Heart right ventricle (tissue), 16 donors: ENCODE measurements at regions of chr18 and their contacts with region 1.

Region 1: DNA sequence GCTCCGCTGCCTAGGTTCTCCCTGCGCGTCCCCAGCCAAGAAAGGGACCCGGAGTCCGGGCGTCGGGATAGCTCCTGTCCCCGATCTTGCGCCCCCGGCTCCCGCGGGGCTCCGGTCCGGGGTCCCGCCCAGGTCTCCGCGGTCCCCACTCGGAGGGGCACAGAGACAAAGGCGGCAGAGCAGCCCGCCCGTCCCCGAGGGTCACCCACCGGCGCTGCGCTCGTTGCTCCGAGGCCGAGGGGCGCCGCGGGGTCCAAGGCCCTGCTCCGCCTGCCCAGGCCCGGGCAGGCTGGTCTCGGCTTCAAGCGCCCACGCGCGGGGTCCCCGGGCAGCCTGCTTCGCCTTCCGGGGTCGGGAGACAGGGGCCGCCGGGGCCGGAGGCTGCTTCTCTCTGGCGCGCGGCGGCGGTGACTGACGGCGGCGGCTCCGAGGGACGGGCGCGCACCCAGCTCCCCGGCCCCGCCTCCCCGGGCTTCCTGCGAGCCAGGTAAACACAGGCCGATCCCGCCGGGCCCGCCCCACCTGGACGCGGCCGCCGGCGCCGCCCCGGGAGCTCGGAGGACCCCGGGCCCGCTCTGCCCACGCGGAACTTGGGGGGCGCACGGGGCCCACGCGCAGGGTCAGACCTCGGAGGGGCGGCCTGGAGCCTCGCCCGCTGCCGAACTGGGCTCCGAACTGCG is at the start of gene MBP:
- DNase-seq: peak; percentile 50 to 59
- ATAC-seq: peak; percentile 17 to 64 (median 58)
- H3K4me3 ChIP-seq: peak within 1 kb of the TSS; percentile 54 to 92 (median 84)
- H3K27ac ChIP-seq: peak within 1 kb of the TSS; percentile 62 to 99 (median 90)
- H3K4me1 ChIP-seq: peaks cover 5 to 61% (median 48%) of the 10 kb centered on the region in 9 donors
- H3K27me3 ChIP-seq: peaks cover 0 to 41% (median 12%) of the 10 kb centered on the region in 7 donors
- CTCF ChIP-seq: no peak
- total RNA-seq, gene MBP: 18.4 to 70.8 (median 52.6) TPM

Region 2: DNA sequence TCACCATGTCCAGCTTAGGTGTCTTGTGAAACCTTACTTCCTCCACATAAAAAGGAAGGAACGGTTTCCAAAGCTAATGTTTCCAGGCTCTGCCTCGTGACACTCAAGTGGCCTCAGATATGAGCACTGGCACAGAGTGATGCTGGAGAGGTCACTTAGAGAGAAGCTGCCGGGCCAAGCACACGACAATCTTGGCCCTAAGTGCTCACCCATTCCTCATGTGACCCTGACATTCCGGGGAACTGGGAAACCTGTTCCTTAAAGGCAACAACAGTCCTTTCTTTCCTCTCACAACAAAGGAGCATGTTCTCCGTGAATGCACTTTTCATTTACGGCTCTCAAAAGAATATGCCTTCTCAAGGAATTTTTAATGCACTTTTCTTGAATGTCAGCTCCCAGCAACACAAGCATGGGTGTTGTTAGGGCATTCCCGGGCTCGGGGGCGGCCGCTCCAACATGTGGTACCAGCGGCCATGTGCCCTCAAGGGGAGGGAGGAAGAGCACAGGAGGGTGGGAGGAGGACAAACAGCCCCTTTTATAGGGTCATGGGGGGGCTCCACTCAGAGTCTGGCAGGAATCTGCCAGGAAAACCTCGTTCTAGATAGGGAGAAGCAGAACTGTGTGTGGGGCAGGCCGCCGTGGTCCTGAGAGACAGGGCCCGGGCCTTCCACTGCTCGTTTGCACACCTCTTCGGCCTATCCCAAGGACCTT is 118.5 kb before region 1 on chr18:
- intact Hi-C with region 1: loop called in 6 of 10 experiments (anchors 5 to 10 kb)
- DNase-seq: peak; percentile 48 to 68
- ATAC-seq: peak; percentile 86 to 98 (median 96)
- H3K4me3 ChIP-seq: no peak overlapping the region
- H3K27ac ChIP-seq: peak overlapping the region; percentile 30 to 85 (median 77)
- H3K4me1 ChIP-seq: peaks cover 5 to 38% (median 32%) of the 10 kb centered on the region in 9 donors
- H3K27me3 ChIP-seq: no peaks in the 10 kb centered on the region
- CTCF ChIP-seq: no peak

Region 3: DNA sequence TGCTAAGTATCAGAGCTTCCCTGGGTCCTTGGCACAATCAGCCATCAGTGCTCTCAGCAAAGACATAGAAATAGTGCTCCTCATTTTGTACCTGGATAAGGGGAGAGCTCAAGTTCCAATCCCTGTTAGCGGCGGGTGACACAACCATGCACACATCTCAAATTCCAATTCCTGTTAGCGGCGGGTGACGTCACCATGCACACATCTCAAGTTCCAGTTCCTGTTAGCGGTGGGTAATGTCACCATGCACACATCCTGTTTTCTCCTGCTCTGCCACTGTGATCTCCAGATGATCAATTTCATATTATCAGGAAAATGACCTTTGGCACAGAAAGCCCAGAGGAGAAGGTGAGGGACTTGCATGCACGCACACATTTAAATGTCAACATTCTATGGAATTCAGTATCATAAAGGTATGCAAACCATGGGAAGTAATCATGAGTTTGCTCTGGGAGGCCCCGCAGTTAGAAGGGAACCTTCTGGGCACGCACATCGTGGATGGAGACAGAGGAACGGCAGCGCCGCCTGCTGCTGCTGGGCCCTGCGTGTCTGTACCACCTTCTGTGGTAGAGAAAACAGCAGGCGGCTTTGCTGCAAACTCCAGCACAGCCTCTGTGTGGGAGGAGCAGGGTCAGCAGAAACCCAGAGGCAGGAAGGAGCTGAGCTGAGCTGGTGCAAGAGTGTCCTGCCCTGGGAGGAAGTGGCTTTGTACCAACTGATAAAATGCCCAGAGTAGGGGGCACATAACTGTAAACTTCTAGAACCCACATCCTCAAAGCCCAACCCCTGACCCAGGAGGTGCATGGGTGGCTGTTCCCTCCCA is 77.7 kb before region 1 on chr18:
- intact Hi-C with region 1: loop called in 3 of 10 experiments (anchors 5 kb)
- DNase-seq: peak; percentile 80 to 81
- ATAC-seq: peak; percentile 76 to 83 (median 81)
- H3K4me3 ChIP-seq: peak overlapping the region in 1 of 10 donors; percentile 42
- H3K27ac ChIP-seq: peak overlapping the region in 9 of 10 donors; percentile 54 to 98 (median 76)
- H3K4me1 ChIP-seq: peaks cover 15 to 93% (median 52%) of the 10 kb centered on the region in 9 donors
- H3K27me3 ChIP-seq: no peaks in the 10 kb centered on the region
- CTCF ChIP-seq: peak in 8 of 9 donors; percentile 46 to 77 (median 64)

Region 4: GRCh38 chr18:77069482-77069881 is 63.0 kb before region 1 on chr18:
- intact Hi-C with region 1: no loop called
- DNase-seq: no peak
- ATAC-seq: no peak
- H3K4me3 ChIP-seq: no peak overlapping the region
- H3K27ac ChIP-seq: peak overlapping the region in 8 of 10 donors; percentile 61 to 91 (median 78)
- H3K4me1 ChIP-seq: peaks cover 10 to 96% (median 71%) of the 10 kb centered on the region in 9 donors
- H3K27me3 ChIP-seq: no peaks in the 10 kb centered on the region
- CTCF ChIP-seq: no peak

Region 5: GRCh38 chr18:77079954-77080682 is 52.4 kb before region 1 on chr18:
- intact Hi-C with region 1: loop called in 1 of 10 experiments (anchors 5 kb)
- DNase-seq: no peak
- ATAC-seq: peak in 7 of 8 donors; percentile 23 to 54 (median 36)
- H3K4me3 ChIP-seq: no peak overlapping the region
- H3K27ac ChIP-seq: peak overlapping the region in 4 of 10 donors; percentile 1 to 75 (median 42)
- H3K4me1 ChIP-seq: peaks cover 9 to 60% (median 32%) of the 10 kb centered on the region in 9 donors
- H3K27me3 ChIP-seq: no peaks in the 10 kb centered on the region
- CTCF ChIP-seq: no peak